MCF 10A (cell line): ENCODE measurements at regions of chr4 and their contacts with region 1.

Region 1: DNA sequence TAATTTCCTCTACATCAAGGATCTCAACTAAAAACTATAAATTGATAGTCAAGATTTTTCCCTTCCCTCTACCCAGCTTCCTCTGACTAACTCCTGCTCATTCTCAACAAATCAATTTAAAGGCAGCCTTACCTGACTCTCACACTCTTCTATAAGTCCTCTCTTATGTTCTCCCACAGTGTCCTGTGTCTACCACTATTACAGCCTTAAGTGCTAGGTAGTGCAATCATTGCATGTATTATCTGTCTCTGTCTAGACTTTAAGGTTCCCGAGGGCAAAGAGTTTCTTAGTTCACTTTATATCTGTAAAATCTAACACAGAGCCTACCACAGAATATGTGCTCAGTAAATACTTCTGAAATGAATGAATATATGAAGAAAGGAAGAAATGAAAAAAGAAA is 123.7 kb downstream of the BTC start:
- DNase-seq: no peak
- H3K4me3 Mint-ChIP-seq: no peak overlapping the region
- H3K27ac Mint-ChIP-seq: no peak overlapping the region
- H3K4me1 Mint-ChIP-seq: peaks cover 10% of the 10 kb centered on the region
- H3K27me3 Mint-ChIP-seq: no peaks in the 10 kb centered on the region
- CTCF ChIP-seq: no peak

Region 2: DNA sequence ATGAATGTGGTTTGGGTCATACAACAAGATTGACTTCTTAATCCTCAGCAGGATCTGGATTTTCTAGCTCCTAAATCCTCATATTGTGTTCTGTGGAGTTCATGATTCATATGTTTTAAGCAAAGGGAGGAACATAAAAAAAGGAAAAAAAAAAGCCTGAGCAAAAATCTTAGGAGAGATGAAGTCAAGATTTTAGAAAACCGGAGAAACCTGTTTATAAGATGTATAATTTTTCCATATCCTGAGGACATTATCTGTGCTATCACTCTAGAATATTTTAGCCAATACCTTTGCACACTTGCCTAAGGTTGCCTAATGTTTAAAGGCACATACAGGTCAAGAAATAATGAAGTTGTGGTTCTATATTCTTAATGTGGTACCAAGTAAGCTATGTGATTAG is 312.6 kb before region 1 on chr4:
- CTCF ChIA-PET with region 1: no interaction called
- POLR2A ChIA-PET with region 1: no interaction called
- intact Hi-C with region 1: no loop called
- DNase-seq: no peak
- H3K4me3 Mint-ChIP-seq: no peak overlapping the region
- H3K27ac Mint-ChIP-seq: no peak overlapping the region
- H3K4me1 Mint-ChIP-seq: peaks cover 12% of the 10 kb centered on the region
- H3K27me3 Mint-ChIP-seq: no peaks in the 10 kb centered on the region
- CTCF ChIP-seq: no peak

Region 3: DNA sequence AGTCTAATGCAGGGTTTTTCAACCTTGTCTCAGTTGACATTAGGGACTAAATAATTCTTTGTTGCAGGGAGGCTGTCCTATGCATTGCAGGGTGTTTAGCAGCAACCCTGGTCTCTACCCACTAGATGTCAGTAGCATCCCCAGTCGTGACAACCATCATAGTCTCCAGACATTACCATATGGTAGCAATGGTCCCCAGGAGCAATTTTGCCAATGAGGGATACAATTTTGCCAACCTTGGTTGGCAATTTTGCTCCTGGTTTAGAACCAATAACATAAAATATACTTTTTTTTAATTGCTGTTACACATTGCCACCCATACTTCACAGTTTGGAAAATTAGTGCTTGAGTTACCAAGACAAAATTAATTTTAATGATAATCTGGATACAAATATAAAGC is 299.7 kb before region 1 on chr4:
- CTCF ChIA-PET with region 1: interaction called, 22 read pairs
- POLR2A ChIA-PET with region 1: no interaction called
- intact Hi-C with region 1: loop called (anchors 1 kb)
- DNase-seq: peak; percentile 84
- H3K4me3 Mint-ChIP-seq: no peak overlapping the region
- H3K27ac Mint-ChIP-seq: no peak overlapping the region
- H3K4me1 Mint-ChIP-seq: peaks cover 35% of the 10 kb centered on the region
- H3K27me3 Mint-ChIP-seq: no peaks in the 10 kb centered on the region
- CTCF ChIP-seq: peak; percentile 83